Thyroid gland (tissue), 4 donors: ENCODE measurements at regions of chr10 and their contacts with region 1.

Region 1: GRCh38 chr10:46106410-46107255 is 60.6 kb upstream of the MSMB start:
- DNase-seq: peak; percentile 62 to 66
- H3K4me3 ChIP-seq: peak overlapping the region in 1 of 3 donors; percentile 46
- H3K27ac ChIP-seq: no peak overlapping the region
- H3K4me1 ChIP-seq: peaks cover 0 to 6% of the 10 kb centered on the region in 2 donors
- H3K27me3 ChIP-seq: no peaks in the 10 kb centered on the region
- CTCF ChIP-seq: peak in 5 of 6 experiments; percentile 11 to 38 (median 32)
- POLR2A ChIP-seq: peak in 1 of 2 donors; percentile 24

Region 2: GRCh38 chr10:47384148-47384921 is 1277.7 kb after region 1 on chr10 and contains the start of gene ZNF488:
- intact Hi-C with region 1: loop called (anchors 5 kb)
- DNase-seq: peak; percentile 83 to 84
- H3K4me3 ChIP-seq: peak within 1 kb of the TSS; percentile 37 to 85 (median 62)
- H3K27ac ChIP-seq: peak within 1 kb of the TSS in 2 of 3 donors; percentile 30 to 73
- H3K4me1 ChIP-seq: peaks cover 0 to 4% of the 10 kb centered on the region in 2 donors
- H3K27me3 ChIP-seq: no peaks in the 10 kb centered on the region
- CTCF ChIP-seq: no peak
- POLR2A ChIP-seq: peak in 1 of 2 donors; percentile 55
- total RNA-seq, gene ZNF488: 0.24 to 0.56 (median 0.40) TPM in 3 of 4 donors, not detected in the other